Breast epithelium (tissue), 4 donors: ENCODE measurements at regions of chr10 and their contacts with region 1.

Region 1: GRCh38 chr10:123904834-123905409 is 13.3 kb upstream of the CPXM2 start:
- DNase-seq: no peak
- H3K4me3 ChIP-seq: no peak overlapping the region
- H3K27ac ChIP-seq: no peak overlapping the region
- H3K4me1 ChIP-seq: no peaks in the 10 kb centered on the region
- H3K27me3 ChIP-seq: peaks cover 0 to 4% of the 10 kb centered on the region in 2 donors
- CTCF ChIP-seq: no peak
- POLR2A ChIP-seq: no peak

Region 2: DNA sequence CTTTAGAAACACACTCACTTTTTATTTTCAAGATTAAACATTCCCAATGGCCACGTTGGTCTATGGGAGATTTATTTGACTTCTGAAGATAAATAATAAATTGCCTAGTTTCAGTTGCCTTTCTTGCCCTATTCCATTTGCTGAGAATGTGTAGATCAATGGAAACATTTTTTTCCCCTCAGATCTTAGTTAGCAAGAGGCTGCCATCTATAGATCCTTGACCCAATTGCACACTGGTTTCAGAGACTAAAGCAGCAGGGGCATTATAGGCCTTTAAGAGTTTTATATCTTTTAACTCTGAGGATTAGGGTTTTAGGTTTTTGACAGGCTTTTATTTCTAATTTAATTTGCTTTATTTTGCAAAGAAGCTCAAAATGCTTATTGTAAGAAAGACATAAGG is 401.9 kb before region 1 on chr10:
- intact Hi-C with region 1: no loop called
- DNase-seq: no peak
- H3K4me3 ChIP-seq: no peak overlapping the region
- H3K27ac ChIP-seq: no peak overlapping the region
- H3K4me1 ChIP-seq: no peaks in the 10 kb centered on the region
- H3K27me3 ChIP-seq: no peaks in the 10 kb centered on the region
- CTCF ChIP-seq: no peak
- POLR2A ChIP-seq: no peak

Region 3: GRCh38 chr10:123687764-123688163 is 217.2 kb before region 1 on chr10:
- intact Hi-C with region 1: no loop called
- DNase-seq: no peak
- H3K4me3 ChIP-seq: no peak overlapping the region
- H3K27ac ChIP-seq: no peak overlapping the region
- H3K4me1 ChIP-seq: no peaks in the 10 kb centered on the region
- H3K27me3 ChIP-seq: no peaks in the 10 kb centered on the region
- CTCF ChIP-seq: no peak
- POLR2A ChIP-seq: no peak

Region 4: DNA sequence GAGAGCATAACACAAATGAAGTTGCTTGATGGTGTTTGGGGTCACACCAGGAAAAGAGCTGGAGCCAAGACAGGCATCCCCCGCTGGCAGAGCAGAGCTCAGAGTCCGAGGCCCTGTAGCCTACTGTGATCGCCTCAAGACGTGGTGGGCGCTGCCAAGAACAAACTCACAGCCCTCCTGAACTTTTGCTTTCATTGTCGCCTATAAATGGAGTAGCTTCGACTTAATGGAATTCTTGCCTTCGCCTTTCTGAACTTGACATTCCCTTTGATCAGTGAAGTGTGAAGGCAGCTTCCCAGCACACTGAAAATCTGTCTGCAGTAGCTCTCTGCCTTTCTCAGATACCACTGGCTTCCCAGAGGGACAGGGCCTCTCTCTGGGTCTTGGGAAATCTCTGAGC is 34.7 kb before region 1 on chr10:
- intact Hi-C with region 1: loop called (anchors 1 kb)
- DNase-seq: no peak
- H3K4me3 ChIP-seq: no peak overlapping the region
- H3K27ac ChIP-seq: no peak overlapping the region
- H3K4me1 ChIP-seq: no peaks in the 10 kb centered on the region
- H3K27me3 ChIP-seq: no peaks in the 10 kb centered on the region
- CTCF ChIP-seq: no peak
- POLR2A ChIP-seq: no peak

Region 5: GRCh38 chr10:124671486-124672075 is 766.7 kb after region 1 on chr10:
- intact Hi-C with region 1: loop called (anchors 5 kb)
- DNase-seq: peak in 1 of 2 donors; percentile 64
- H3K4me3 ChIP-seq: no peak overlapping the region
- H3K27ac ChIP-seq: peak overlapping the region; percentile 73 to 75
- H3K4me1 ChIP-seq: peaks cover 4 to 10% of the 10 kb centered on the region in 2 donors
- H3K27me3 ChIP-seq: no peaks in the 10 kb centered on the region
- CTCF ChIP-seq: peak in 2 of 3 donors; percentile 30 to 43
- POLR2A ChIP-seq: no peak